ENCODE measurements at regions of chr9 and their contacts with region 1.

Region 1: GRCh38 chr9:115694014-115694413 is 459.6 kb upstream of the PAPPA start:
- DNase-seq: peak; percentile 65
- H3K4me3 ChIP-seq: no peak overlapping the region
- H3K27ac ChIP-seq: no peak overlapping the region
- H3K4me1 ChIP-seq: peaks cover 20% of the 10 kb centered on the region
- H3K27me3 ChIP-seq: no peaks in the 10 kb centered on the region
- CTCF ChIP-seq: peak; percentile 41 to 60

Region 2: GRCh38 chr9:115672477-115673316 is 21.3 kb before region 1 on chr9:
- CTCF ChIA-PET with region 1: no interaction called
- dilution Hi-C with region 1: no loop called
- in situ Hi-C with region 1: no loop called
- intact Hi-C with region 1: loop called (anchors 1 kb)
- DNase-seq: peak; percentile 95
- H3K4me3 ChIP-seq: no peak overlapping the region
- H3K27ac ChIP-seq: peak overlapping the region; percentile 95
- H3K4me1 ChIP-seq: peaks cover 45% of the 10 kb centered on the region
- H3K27me3 ChIP-seq: no peaks in the 10 kb centered on the region
- CTCF ChIP-seq: no peak

Region 3: GRCh38 chr9:115939065-115939765 is 245.2 kb after region 1 on chr9:
- CTCF ChIA-PET with region 1: no interaction called
- dilution Hi-C with region 1: no loop called
- in situ Hi-C with region 1: no loop called
- intact Hi-C with region 1: loop called (anchors 5 kb)
- DNase-seq: peak; percentile 91
- H3K4me3 ChIP-seq: no peak overlapping the region
- H3K27ac ChIP-seq: peak overlapping the region; percentile 79
- H3K4me1 ChIP-seq: peaks cover 45% of the 10 kb centered on the region
- H3K27me3 ChIP-seq: no peaks in the 10 kb centered on the region
- CTCF ChIP-seq: no peak

Region 4: GRCh38 chr9:116112236-116112635 is 418.2 kb after region 1 on chr9:
- CTCF ChIA-PET with region 1: no interaction called
- dilution Hi-C with region 1: no loop called
- in situ Hi-C with region 1: no loop called
- intact Hi-C with region 1: loop called (anchors 1 kb)
- DNase-seq: peak; percentile 25
- H3K4me3 ChIP-seq: no peak overlapping the region
- H3K27ac ChIP-seq: no peak overlapping the region
- H3K4me1 ChIP-seq: no peaks in the 10 kb centered on the region
- H3K27me3 ChIP-seq: no peaks in the 10 kb centered on the region
- CTCF ChIP-seq: peak; percentile 49 to 57

Region 5: GRCh38 chr9:116208417-116209232 is 514.6 kb after region 1 on chr9:
- CTCF ChIA-PET with region 1: no interaction called
- dilution Hi-C with region 1: no loop called
- in situ Hi-C with region 1: no loop called
- intact Hi-C with region 1: loop called (anchors 1 kb)
- DNase-seq: peak; percentile 51
- H3K4me3 ChIP-seq: no peak overlapping the region
- H3K27ac ChIP-seq: no peak overlapping the region
- H3K4me1 ChIP-seq: no peaks in the 10 kb centered on the region
- H3K27me3 ChIP-seq: no peaks in the 10 kb centered on the region
- CTCF ChIP-seq: peak; percentile 10 to 29

Region 6: DNA sequence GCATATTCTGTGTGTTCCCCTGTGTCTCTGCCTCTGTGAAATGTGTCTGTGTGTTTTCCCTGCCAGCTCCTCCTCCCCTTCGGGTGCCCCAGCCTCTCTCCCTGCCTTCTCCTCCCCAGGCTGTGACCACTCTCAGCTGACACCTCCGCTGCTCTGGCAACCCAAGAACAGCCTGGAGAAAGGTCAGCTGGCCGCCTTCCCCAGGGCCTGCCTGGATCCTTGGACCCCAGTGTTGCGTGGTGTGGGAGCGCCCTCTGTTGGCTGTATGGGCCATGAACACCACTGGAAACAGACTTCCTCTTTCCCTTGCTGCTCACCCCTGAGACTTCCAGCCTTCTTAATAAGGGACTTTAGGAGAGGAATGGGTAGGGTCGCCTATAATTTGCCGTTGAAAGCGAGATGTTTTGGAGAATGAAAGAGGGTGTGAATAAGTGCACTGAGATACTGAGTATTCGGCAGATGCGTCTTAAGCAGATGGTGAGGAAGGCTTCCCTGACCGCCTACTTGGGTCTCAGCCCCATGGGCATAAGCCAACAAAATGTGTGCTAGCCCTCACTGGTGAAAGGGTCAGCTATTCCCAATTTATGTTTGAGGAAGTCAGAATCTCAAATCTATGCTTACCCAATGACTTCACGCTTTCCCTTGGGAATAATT is 878.2 kb after region 1 on chr9:
- CTCF ChIA-PET with region 1: no interaction called
- dilution Hi-C with region 1: no loop called
- in situ Hi-C with region 1: no loop called
- intact Hi-C with region 1: loop called (anchors 1 kb)
- DNase-seq: peak; percentile 48
- H3K4me3 ChIP-seq: no peak overlapping the region
- H3K27ac ChIP-seq: no peak overlapping the region
- H3K4me1 ChIP-seq: no peaks in the 10 kb centered on the region
- H3K27me3 ChIP-seq: no peaks in the 10 kb centered on the region
- CTCF ChIP-seq: peak; percentile 90 to 96

Region 7: DNA sequence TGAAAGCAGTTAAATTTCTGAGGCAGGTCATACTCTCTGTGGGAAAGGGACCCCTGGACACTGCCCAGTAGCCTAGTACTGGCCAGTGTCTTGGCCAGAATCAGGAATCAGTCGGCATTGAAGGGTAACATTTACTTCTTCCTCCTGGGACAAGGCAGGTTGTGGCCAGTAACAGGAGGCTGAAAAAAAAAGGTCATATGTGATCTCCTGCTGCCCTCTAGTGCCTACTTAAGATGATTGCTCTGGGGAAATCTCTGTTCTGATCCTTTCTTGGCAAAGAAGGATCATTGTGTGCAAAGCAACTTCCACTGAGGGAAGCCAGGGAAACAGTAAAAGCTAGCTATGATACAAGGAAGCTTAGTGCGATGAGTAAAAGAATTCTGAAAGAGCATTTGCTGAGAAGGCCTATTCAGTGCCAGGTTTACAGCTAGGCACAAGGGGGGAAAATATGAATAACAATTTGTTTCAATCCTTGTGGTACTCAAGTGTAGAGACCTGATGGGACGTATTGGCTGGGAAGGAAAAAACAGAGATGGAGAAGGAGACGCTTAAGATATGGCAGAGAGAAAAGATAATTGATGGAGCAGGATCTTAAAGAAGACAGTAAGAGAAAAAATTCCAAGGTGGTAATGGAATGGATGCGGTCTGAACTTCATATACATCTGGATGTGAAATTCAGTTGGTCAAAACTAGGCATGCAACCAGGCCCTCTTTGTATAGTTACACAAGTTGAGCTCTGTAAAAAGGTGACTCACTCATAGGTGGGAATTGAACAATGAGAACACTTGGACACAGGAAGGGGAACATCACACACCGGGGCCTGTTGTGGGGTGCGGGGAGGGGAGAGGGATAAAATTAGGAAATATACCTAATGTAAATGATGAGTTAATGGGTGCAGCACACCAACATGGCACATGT is 967.3 kb after region 1 on chr9:
- CTCF ChIA-PET with region 1: no interaction called
- dilution Hi-C with region 1: no loop called
- in situ Hi-C with region 1: no loop called
- intact Hi-C with region 1: loop called (anchors 1 kb)
- DNase-seq: peak; percentile 67
- H3K4me3 ChIP-seq: no peak overlapping the region
- H3K27ac ChIP-seq: peak overlapping the region; percentile 32
- H3K4me1 ChIP-seq: peaks cover 20% of the 10 kb centered on the region
- H3K27me3 ChIP-seq: no peaks in the 10 kb centered on the region
- CTCF ChIP-seq: peak; percentile 75 to 82

Measured in mammary epithelial cell (primary cell).